A549 (cell line): ENCODE measurements at regions of chrX and their contacts with region 1.

Region 1: DNA sequence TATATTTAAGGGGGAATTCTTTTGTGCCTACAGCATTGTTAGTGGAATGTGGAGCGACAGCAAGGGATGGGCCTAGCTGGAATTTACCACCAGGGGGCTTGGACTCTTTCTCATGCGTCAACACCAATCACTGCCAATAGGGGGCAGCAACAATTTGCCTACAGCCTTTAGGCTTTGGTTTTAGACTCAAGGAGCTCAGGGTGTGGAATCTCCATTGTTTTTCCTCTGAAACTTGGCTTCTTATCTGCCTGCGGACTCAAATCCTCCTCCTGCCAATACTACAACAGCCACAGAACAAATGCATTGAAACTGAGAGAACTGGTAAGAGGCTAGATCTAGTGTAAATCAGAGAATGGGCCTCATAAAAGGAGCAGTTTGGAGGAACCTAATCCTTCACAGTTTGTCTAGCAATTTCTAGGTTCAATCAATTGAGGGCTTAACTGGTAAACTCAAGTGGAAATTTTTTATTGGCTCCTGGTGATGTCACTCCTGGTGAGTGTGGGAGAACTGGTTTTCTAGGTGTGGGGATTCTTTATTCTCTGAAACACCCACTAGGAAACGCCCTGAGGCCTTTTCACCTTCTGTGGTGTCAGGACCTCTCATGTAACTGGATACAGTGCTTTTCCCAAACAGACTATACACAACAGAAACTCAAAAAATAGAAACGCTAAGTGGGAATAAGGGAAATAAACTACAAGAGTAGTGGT is 27.9 kb upstream of the TMSB4X start:
- DNase-seq: peak; percentile 55 to 88
- ATAC-seq: peak; percentile 69 to 85; a peak in 5 of 6 replicates
- H3K4me3 ChIP-seq: no peak overlapping the region
- H3K27ac ChIP-seq: peak overlapping the region; percentile 80 to 91
- H3K4me1 ChIP-seq: peaks cover 37% of the 10 kb centered on the region
- CTCF ChIP-seq: peak; percentile 91
- EP300 ChIP-seq: no peak
- POLR2A ChIP-seq: no peak
- RAD21 ChIP-seq: peak; percentile 87 to 93

Region 2: DNA sequence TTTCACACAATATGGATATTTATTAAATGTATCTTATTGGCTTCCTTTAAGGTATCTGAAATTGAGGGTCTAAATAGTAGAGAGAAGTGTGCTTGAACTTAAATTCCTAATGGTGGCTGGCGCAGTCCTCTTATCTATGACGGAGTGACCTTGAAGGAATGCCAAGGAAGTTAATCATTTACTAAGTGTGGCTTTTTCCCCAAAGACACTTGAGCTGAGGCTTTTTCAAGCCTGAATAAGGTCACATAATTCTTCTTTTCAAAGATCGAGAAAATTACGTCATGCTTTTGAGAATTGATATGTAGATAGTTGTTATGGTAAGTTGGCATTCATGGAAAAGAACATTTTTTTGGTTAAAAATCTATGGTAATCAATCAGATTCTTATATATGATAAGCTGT is 167.5 kb before region 1 on chrX:
- CTCF ChIA-PET with region 1: no interaction called
- POLR2A ChIA-PET with region 1: no interaction called
- DNase-seq: peak; percentile 39 to 61
- ATAC-seq: no peak
- H3K4me3 ChIP-seq: no peak overlapping the region
- H3K27ac ChIP-seq: no peak overlapping the region
- H3K4me1 ChIP-seq: peaks cover 14% of the 10 kb centered on the region; the same call in 2 of the 3 replicates
- CTCF ChIP-seq: no peak
- EP300 ChIP-seq: no peak
- POLR2A ChIP-seq: no peak
- RAD21 ChIP-seq: no peak

Region 3: GRCh38 chrX:12936947-12937346 is 10.0 kb before region 1 on chrX:
- CTCF ChIA-PET with region 1: interaction called, 12 read pairs
- POLR2A ChIA-PET with region 1: no interaction called
- DNase-seq: no peak
- ATAC-seq: no peak
- H3K4me3 ChIP-seq: no peak overlapping the region
- H3K27ac ChIP-seq: no peak overlapping the region
- H3K4me1 ChIP-seq: no peaks in the 10 kb centered on the region
- CTCF ChIP-seq: no peak
- EP300 ChIP-seq: no peak
- POLR2A ChIP-seq: no peak
- RAD21 ChIP-seq: no peak

Region 4: DNA sequence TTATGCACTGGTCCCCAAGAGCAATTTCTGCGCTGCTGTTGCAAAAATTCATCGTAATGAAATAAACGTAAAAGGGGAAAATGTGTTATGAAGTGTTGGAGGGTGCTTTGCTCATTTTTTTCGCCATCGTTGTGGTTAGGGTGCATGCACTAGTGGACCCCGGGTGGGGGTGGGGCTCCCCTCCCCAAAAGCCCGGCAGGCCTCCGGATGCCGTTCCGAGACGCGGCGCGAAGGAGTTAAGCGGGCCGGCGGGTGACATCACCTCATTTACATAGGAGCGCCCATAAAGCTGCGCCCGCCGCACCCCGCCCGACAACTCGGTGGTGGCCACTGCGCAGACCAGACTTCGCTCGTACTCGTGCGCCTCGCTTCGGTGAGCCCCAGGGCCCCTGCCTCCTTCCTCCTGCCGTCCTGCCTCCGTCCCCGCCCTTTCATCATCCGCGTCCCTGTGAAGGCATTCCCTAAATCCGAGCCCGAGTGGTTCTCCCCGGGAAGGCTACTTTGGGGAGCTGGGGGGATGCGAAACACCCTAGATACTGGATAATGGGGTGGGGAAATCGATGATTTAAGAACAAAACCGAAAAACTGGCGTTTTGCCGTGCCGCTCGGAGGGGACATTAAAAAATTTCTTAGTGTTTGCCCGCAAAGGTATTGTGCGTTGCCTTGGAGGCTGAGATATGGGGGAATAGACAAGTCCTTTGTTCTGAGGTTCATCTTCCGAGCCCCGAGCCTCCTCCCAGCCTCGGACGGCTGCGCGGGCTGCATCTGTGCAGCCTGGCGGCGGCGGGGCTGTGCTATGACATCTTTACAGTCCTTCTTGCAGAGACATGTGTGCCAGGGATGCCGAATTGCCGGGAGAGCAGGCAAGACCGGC is 28.0 kb after region 1 on chrX and contains the start of gene TMSB4X:
- CTCF ChIA-PET with region 1: interaction called, 10 read pairs
- POLR2A ChIA-PET with region 1: interaction called, 14 read pairs
- DNase-seq: peak; percentile 69 to 93
- ATAC-seq: peak; percentile 83 to 84
- H3K4me3 ChIP-seq: peak within 1 kb of the TSS; percentile 94
- H3K27ac ChIP-seq: peak within 1 kb of the TSS; percentile 97 to 99
- H3K4me1 ChIP-seq: peaks cover 37% of the 10 kb centered on the region
- CTCF ChIP-seq: no peak
- EP300 ChIP-seq: no peak
- POLR2A ChIP-seq: peak; percentile 99
- RAD21 ChIP-seq: peak; percentile 4 to 31; a peak in 2 of 5 replicates
- polyA plus RNA-seq, gene TMSB4X: 3,130 and 3,742 TPM in 2 replicates

Region 5: GRCh38 chrX:12981880-12982279 is 34.9 kb after region 1 on chrX:
- CTCF ChIA-PET with region 1: interaction called, 11 read pairs
- POLR2A ChIA-PET with region 1: interaction called, 12 read pairs
- DNase-seq: no peak
- ATAC-seq: no peak
- H3K4me3 ChIP-seq: no peak overlapping the region
- H3K27ac ChIP-seq: peak overlapping the region; percentile 97 to 99
- H3K4me1 ChIP-seq: peaks cover 44% of the 10 kb centered on the region
- CTCF ChIP-seq: no peak
- EP300 ChIP-seq: no peak
- POLR2A ChIP-seq: no peak
- RAD21 ChIP-seq: no peak

Region 6: DNA sequence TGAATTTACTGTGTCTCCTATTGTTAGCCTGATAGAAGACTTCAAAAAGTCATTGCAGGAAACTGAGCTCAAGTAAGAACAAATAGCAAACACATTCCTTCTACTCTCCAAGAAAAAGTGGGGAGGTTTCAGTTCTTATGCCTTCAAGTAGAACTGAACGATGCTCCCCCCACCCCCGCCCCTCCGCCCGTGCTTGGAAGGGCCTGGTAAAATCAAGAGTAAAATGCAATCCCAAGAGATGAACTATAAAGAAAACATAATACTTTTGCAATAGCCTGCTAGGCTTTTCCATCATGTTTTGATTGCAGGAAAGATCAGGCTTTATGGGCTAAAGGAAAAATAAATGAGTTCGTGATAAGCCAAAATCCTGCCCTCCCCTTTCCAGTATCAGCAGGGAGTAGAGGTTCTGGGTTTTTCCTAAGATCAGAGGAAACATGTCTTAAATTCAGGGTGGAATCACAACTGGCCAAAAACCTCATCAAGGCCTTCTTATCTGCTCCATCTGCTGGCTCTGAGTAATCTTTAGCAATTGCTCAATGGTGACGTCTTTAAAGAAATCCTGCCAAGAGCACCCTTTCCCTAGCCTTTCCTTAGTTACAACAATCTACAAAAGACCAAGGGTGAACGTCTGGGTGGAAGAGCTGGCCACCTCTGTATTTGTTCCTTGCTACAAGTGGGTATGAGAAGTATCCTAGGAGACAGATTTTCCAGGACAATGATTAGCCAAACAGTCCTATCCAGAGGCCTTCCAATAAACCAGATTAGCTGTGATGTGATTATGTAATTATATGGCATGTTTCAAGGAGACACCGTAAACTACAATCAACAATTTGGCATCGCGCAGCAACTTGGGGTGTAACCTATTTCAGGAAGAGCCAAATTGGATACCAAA is 163.7 kb after region 1 on chrX:
- CTCF ChIA-PET with region 1: interaction called, 10 read pairs
- POLR2A ChIA-PET with region 1: no interaction called
- DNase-seq: peak; percentile 62 to 99
- ATAC-seq: peak; percentile 96
- H3K4me3 ChIP-seq: no peak overlapping the region
- H3K27ac ChIP-seq: peak overlapping the region; percentile 93 to 95
- H3K4me1 ChIP-seq: peaks cover 47% of the 10 kb centered on the region
- CTCF ChIP-seq: no peak
- EP300 ChIP-seq: peak; percentile 95 to 97; a peak in 4 of 5 replicates
- POLR2A ChIP-seq: no peak
- RAD21 ChIP-seq: peak; percentile 43 to 80